ENCODE measurements at regions of chr16 and their contacts with region 1.

Region 1: GRCh38 chr16:56931892-56932720 is at the start of gene HERPUD1:
- DNase-seq: peak; percentile 99
- H3K4me3 Mint-ChIP-seq: peak within 1 kb of the TSS; percentile 98
- H3K27ac Mint-ChIP-seq: peak within 1 kb of the TSS; percentile 98
- H3K4me1 Mint-ChIP-seq: peaks cover 40% of the 10 kb centered on the region
- H3K27me3 Mint-ChIP-seq: no peaks in the 10 kb centered on the region
- total RNA-seq, gene HERPUD1: 118 to 120 TPM

Region 2: DNA sequence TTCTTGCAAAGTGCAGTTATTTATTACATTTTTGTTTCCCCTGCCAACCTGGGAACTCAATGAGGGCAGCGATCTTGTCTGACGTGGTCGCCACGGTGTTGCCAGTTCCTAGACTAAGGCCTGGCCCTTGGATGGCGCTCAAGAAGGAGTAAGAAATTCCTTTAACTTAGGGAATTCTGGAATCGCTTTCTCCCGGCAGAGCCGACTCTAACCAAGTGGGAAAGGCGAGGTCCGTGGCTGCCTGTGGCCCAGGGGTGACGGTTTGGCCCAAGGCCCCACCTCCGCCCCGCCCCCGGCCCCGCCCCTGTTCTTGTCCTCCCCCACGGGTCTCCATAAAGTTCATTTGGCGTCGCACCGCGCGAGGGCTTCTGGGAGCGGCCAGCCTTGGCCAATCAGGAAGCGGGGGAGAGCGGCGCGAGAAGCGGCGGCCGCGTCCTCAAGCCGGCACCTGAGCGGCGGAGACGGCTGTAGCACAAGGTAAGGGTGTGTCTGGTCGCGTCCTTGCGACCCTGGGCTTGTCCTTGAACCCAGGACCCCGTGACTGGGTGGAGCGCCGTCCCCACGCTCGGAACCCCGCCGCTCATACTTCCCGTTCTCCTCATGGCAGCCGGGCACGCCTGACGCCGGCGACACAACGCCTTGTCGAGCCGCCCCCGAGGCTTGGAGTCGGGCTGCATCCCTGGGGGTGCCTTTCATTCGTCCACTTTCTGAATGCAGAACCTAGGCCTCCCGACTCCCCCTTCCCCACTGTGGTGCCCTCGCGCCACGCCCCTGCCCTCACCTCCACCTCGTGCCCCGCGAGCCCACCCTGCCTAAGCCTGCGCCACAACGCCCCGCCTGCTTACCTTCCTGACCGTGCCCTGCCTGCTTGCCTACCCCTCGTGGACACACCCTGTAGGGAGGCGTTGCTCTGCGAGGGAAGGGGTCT is 202.1 kb before region 1 on chr16 and contains the start of gene NUP93:
- CTCF ChIA-PET with region 1: no interaction called
- intact Hi-C with region 1: loop called (anchors 5 kb)
- DNase-seq: peak; percentile 94
- H3K4me3 Mint-ChIP-seq: no peak within 1 kb of the TSS
- H3K27ac Mint-ChIP-seq: peak within 1 kb of the TSS; percentile 78
- H3K4me1 Mint-ChIP-seq: peaks cover 14% of the 10 kb centered on the region
- H3K27me3 Mint-ChIP-seq: no peaks in the 10 kb centered on the region
- total RNA-seq, gene NUP93: 161 to 172 TPM

Region 3: GRCh38 chr16:56876048-56876682 is 55.9 kb before region 1 on chr16:
- CTCF ChIA-PET with region 1: no interaction called
- intact Hi-C with region 1: no loop called
- DNase-seq: no peak
- H3K4me3 Mint-ChIP-seq: no peak overlapping the region
- H3K27ac Mint-ChIP-seq: no peak overlapping the region
- H3K4me1 Mint-ChIP-seq: peaks cover 3% of the 10 kb centered on the region
- H3K27me3 Mint-ChIP-seq: no peaks in the 10 kb centered on the region

Region 4: GRCh38 chr16:56916571-56917403 is 15.3 kb before region 1 on chr16:
- CTCF ChIA-PET with region 1: interaction called, 5 read pairs
- intact Hi-C with region 1: loop called (anchors 1 kb)
- DNase-seq: peak; percentile 69
- H3K4me3 Mint-ChIP-seq: peak overlapping the region; percentile 7
- H3K27ac Mint-ChIP-seq: peak overlapping the region; percentile 76
- H3K4me1 Mint-ChIP-seq: peaks cover 40% of the 10 kb centered on the region
- H3K27me3 Mint-ChIP-seq: no peaks in the 10 kb centered on the region

Region 5: DNA sequence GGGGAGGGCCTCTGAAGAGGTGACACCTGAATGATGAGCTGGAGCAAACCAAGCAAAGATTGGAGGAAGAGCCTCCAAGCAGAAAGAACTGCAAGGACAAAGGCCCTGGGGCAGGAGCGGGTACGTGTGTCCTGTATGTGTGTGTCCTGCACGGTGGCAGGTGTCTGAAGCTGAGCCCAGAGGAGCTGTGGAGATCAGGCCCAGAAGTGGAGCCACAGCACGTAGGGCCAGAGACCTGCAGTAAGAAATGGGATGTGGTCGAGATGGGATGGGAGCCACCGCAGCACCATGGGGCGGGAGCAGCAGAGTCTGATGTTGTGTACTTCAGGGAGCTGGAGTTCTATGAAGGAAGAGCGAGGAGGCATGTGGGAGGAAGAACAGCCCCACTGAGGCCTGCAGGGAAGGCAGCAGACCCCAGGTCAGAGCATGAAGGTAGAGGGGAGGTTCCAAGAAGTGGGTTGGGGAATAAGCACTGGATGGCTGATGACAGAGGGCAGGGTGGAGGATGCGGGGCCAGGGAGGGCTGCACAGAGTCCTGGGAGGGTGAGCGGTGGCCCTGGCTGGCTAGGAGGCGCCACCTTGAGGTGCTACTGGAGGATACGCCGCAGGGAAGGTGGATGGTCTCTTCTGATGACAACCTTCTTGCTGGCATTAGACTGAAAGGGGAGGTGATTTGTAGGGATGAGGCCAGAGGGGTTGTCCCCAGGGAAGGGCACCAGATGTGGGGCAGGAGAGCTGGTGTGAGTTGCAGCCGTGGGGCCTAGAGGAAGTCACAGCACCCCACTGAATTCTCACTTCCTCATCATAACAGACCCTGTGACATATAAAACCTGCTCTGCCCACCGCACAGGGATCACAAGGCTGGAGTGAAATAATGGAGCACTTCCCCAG is 19.0 kb after region 1 on chr16:
- CTCF ChIA-PET with region 1: interaction called, 4 read pairs
- intact Hi-C with region 1: loop called (anchors 2 kb)
- DNase-seq: peak; percentile 76
- H3K4me3 Mint-ChIP-seq: no peak overlapping the region
- H3K27ac Mint-ChIP-seq: no peak overlapping the region
- H3K4me1 Mint-ChIP-seq: peaks cover 20% of the 10 kb centered on the region
- H3K27me3 Mint-ChIP-seq: no peaks in the 10 kb centered on the region

Region 6: GRCh38 chr16:56970934-56971767 is 39.0 kb after region 1 on chr16:
- CTCF ChIA-PET with region 1: no interaction called
- intact Hi-C with region 1: no loop called
- DNase-seq: no peak
- H3K4me3 Mint-ChIP-seq: no peak overlapping the region
- H3K27ac Mint-ChIP-seq: no peak overlapping the region
- H3K4me1 Mint-ChIP-seq: peaks cover 23% of the 10 kb centered on the region
- H3K27me3 Mint-ChIP-seq: no peaks in the 10 kb centered on the region

Region 7: DNA sequence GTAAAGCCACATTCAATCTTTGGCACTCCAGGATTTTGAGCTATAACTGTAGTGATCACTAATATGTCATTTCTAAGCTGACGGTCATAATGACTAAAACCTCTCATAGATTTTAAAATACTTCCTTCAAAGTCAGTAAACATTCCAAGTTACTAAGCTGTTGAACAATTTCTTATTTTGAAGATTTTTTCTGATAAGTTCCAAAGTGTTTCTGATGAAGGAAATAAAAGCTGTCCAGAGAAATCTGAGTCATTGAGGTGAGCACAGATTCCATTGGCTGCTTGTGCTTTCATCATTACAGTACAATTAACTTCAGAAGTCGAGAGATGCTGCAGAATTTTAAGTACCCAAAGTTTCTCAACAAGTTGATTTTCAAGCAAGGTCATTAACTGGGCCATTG is 81.1 kb after region 1 on chr16:
- CTCF ChIA-PET with region 1: no interaction called
- intact Hi-C with region 1: loop called (anchors 1 kb)
- DNase-seq: no peak
- H3K4me3 Mint-ChIP-seq: no peak overlapping the region
- H3K27ac Mint-ChIP-seq: peak overlapping the region; percentile 97
- H3K4me1 Mint-ChIP-seq: peaks cover 85% of the 10 kb centered on the region
- H3K27me3 Mint-ChIP-seq: no peaks in the 10 kb centered on the region

Region 8: GRCh38 chr16:57694725-57695679 is 762.9 kb after region 1 on chr16 and contains the start of gene DRC7:
- CTCF ChIA-PET with region 1: no interaction called
- intact Hi-C with region 1: no loop called
- DNase-seq: peak; percentile 22
- H3K4me3 Mint-ChIP-seq: peak within 1 kb of the TSS; percentile 53
- H3K27ac Mint-ChIP-seq: no peak within 1 kb of the TSS
- H3K4me1 Mint-ChIP-seq: peaks cover 11% of the 10 kb centered on the region
- H3K27me3 Mint-ChIP-seq: no peaks in the 10 kb centered on the region
- total RNA-seq, gene DRC7: 0.49 TPM in 1 of 2 experiments, not detected in the other